IMR-90 (cell line): ENCODE measurements at regions of chr4 and their contacts with region 1.

Region 1: DNA sequence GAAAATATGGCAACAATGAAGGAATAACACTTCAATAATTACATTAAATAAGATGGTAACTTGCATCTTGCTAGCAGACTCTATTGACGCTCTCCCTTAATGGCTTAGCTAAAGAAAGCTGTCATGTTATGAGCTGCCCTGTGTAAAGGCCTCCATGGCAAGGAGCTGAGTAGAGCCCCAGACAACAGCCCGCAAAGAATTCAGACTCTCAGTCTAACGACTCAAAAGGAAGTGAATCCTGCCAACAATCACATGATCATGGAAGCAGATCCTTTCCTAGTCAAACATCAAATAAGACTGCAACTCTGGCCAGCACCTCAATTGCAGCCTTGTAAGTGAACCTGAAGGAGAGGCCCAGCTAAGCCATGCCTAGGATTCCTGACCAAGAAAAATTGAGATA is 157.6 kb downstream of the MAB21L2 start:
- DNase-seq: no peak
- ATAC-seq: no peak
- H3K4me3 ChIP-seq: no peak overlapping the region
- H3K27ac ChIP-seq: no peak overlapping the region
- H3K4me1 ChIP-seq: no peaks in the 10 kb centered on the region
- H3K27me3 ChIP-seq: no peaks in the 10 kb centered on the region
- CTCF ChIP-seq: no peak
- POLR2A ChIP-seq: no peak
- RAD21 ChIP-seq: no peak

Region 2: DNA sequence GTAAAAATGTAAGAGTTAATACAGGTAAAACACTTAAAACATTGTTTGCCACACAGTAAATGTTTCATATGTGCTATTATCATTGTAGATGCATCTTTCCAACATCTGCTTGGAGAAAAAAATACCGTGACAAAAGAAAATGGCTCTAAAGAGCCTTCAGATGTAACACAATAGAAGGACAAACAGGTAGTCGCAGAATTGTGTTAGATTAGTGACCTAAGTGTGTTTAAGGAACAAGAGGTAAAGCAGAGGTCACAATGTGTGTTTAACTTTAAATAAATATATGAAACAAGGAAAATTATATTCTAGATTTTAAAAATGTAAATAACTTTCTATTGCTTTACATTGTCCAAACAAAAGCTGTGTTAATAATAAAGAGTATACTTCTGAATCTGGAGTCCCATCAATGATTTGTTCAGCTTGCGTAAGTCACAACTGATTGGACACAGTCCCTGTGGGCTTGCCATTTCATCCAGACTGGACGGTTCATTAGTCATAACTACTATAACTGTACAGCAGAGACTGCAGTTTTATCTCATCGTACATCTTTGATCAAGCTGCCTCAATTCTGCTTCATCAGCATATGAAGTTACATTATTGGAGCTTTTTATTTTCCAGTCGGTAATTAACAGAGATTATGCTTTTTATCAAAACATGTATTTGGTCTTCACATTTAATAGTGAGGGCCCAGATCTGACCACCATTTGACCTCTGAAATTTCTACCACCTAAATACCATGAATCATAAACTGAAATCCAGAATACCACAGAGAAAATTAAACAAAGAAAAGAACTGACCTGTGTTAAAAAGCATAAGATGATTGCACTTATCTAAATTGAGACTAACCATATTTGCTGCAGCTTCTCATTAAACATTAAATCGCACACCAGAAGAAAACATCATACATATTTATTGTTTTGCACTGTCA is 170.3 kb before region 1 on chr4:
- CTCF ChIA-PET with region 1: no interaction called
- POLR2A ChIA-PET with region 1: no interaction called
- dilution Hi-C with region 1: no loop called
- in situ Hi-C with region 1: no loop called
- intact Hi-C with region 1: no loop called
- DNase-seq: peak; percentile 79
- ATAC-seq: peak; percentile 60; the same call in 1 of the 2 replicates
- H3K4me3 ChIP-seq: no peak overlapping the region
- H3K27ac ChIP-seq: no peak overlapping the region
- H3K4me1 ChIP-seq: no peaks in the 10 kb centered on the region; the same call in none of the 2 replicates
- H3K27me3 ChIP-seq: no peaks in the 10 kb centered on the region
- CTCF ChIP-seq: no peak
- POLR2A ChIP-seq: no peak
- RAD21 ChIP-seq: no peak

Region 3: GRCh38 chr4:150679765-150680343 is 59.7 kb before region 1 on chr4:
- CTCF ChIA-PET with region 1: no interaction called
- POLR2A ChIA-PET with region 1: no interaction called
- dilution Hi-C with region 1: no loop called
- in situ Hi-C with region 1: no loop called
- intact Hi-C with region 1: loop called (anchors 5 kb)
- DNase-seq: peak; percentile 8
- ATAC-seq: peak; percentile 42
- H3K4me3 ChIP-seq: no peak overlapping the region
- H3K27ac ChIP-seq: no peak overlapping the region
- H3K4me1 ChIP-seq: no peaks in the 10 kb centered on the region
- H3K27me3 ChIP-seq: no peaks in the 10 kb centered on the region
- CTCF ChIP-seq: no peak
- POLR2A ChIP-seq: no peak
- RAD21 ChIP-seq: no peak

Region 4: GRCh38 chr4:150769845-150770244 is 30.3 kb after region 1 on chr4:
- CTCF ChIA-PET with region 1: no interaction called
- POLR2A ChIA-PET with region 1: no interaction called
- dilution Hi-C with region 1: no loop called
- in situ Hi-C with region 1: no loop called
- intact Hi-C with region 1: no loop called
- DNase-seq: no peak
- ATAC-seq: no peak
- H3K4me3 ChIP-seq: no peak overlapping the region
- H3K27ac ChIP-seq: no peak overlapping the region
- H3K4me1 ChIP-seq: 0 out of 2 replicates have a peak, but pooled peaks cover 2% of the 10 kb centered on the region
- H3K27me3 ChIP-seq: no peaks in the 10 kb centered on the region
- CTCF ChIP-seq: no peak
- POLR2A ChIP-seq: no peak
- RAD21 ChIP-seq: no peak